Left cardiac atrium (tissue), 4 donors: ENCODE measurements at regions of chr16 and their contacts with region 1.

Region 1: DNA sequence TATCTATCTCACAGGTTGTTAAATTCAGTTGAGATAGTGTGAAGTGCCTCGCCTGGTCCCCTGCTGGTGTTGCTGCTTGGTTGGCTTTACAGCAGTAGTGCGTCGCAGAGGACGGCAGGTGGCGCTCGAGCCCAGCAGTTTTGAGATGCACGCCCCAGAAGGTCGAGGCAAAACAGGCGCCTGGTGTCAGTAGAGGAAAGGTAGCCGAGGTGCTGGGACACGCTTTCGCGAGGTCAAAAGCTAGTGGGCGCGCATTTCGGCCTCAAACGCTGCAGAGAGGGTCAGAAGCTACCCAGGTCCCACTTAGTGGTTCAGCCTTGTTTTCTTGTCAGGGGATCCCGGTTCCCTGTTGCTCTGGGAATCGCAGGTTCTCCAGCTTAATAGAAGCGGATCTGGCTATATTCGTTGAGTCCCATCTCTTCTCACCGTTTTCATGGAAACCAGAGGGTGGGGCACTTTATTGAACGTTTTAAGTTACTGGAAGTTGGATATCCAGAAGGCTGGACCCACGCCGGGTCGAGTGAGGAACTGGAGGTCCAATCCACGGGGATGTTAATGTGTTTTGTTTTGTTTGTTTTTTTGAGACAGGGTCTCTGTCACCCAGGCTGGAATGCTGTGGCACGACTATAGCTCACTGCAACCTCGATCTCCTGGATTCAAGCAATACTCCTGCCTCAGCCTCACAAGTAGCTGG is 10.3 kb upstream of the ZFP90 start:
- DNase-seq: peak; percentile 88
- ATAC-seq: peak; percentile 85 to 91

Region 2: DNA sequence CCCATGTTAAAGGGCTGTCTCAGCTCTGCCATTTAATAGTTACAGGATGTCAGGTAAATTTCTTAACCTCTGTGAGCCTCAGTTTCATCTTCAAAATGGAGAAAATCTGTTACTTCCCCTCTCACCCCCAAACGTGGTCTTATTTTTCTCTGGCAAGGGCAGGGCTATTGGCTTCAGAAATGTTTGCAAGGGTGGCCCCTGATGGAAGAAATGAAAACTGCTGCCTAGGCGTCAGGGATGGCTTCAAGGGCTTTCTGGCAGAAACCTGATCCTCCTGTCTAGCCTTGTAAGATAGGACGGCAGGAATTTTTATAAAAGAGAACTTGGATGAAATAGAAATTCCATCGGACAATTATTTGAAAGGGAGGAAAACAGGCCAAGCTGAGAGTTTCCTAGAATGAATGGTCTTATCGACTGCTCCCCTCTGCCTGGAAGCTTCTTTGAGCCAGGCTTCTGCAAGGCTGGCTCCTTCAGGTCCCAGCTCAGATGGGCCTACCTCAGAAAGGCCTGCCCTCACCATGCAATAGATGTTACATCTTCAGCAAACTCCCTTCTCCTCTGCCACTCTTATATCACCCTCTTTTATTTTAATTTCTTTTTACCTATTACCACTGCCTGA is 271.5 kb after region 1 on chr16:
- intact Hi-C with region 1: loop called in 1 of 2 experiments (anchors 2 kb)
- DNase-seq: peak; percentile 31
- ATAC-seq: peak; percentile 86 to 92

Region 3: DNA sequence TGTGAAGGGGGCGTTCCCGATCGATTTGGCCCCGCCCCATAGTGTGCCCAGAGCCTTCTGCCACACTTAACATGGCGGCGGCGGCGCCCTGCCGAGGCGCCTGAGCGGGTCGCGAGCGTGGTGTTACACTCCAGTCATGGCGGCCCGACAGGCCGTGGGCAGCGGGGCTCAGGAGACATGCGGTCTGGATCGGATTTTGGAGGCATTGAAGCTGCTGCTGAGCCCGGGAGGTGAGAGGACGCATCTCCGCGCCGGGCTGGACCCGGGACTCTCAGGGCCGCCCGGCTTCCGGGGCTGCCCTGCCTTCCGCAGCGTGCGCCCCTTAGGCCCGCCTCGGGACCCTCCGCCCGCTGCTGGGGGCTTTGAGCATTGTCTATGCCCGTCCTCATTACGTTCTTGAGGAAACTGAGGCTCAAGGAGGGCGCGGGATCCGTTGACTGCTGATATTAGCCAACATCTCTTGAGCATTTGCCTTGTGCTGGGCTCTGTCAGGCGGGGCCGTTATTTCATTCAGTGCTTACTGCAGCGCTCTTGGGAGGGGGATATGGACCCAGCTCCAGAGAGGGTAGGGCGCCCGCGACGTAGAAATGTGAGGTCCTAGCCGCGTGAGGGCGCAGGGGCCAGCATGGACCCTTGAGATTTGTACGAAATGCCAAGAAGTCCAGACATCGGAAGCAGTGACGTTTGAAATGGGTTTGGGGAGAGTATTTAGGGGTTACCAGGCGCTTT is 314.8 kb after region 1 on chr16 and contains the start of gene TANGO6:
- intact Hi-C with region 1: loop called in 1 of 2 experiments (anchors 2 kb)
- DNase-seq: peak; percentile 90
- ATAC-seq: peak; percentile 99
- total RNA-seq, gene TANGO6: 9.5 to 12.4 TPM

Region 4: DNA sequence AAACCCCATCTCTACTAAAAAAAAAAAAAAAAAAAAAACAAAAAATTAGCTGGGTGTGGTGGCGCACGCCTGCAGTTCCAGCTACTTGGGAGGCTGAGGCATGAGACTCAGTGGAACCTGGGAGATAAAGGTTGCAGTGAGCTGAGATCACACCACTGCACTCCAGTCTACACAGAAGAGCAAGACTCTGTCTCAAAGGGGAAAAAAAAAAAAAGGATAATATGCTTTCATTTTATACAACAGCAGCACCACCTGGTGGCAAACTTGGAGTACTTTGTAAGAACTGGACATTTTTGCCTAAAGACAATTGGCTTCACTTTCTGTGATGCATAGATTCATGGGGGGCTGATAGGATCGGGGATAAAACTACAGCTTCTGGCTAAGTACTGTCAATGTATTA is 595.1 kb after region 1 on chr16:
- intact Hi-C with region 1: loop called (anchors 5 to 10 kb)
- DNase-seq: peak; percentile 64
- ATAC-seq: peak in 1 of 2 donors; percentile 30